Ovary (tissue), 10 donors: ENCODE measurements at regions of chr9 and their contacts with region 1.

Region 1: DNA sequence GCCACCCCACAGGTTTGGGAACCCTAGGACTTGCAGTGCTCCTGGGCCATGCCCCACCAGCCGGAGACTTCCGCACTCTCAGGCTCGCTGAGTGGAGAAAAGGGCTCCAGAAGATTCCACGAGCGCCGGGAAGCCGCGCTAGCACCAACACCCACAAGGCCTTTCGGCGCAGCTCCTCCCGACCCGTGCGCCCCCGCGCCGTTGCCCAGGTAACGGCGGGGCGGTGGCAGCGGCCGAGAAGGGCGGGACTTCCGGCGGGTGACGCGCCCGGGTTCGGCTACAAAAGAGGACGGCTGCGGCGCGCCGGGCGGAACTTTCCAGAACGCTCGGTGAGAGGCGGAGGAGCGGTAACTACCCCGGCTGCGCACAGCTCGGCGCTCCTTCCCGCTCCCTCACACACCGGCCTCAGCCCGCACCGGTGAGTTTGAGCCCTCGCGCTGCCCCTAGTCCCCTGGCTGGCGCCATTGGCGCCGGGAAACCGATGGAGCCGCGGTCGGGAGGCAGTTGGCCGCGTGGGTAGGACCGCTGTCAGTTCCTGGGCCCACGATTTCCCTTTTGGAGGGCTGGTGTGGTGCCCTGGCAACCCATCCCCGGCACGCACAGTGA is at the start of gene DNAJA1:
- DNase-seq: peak; percentile 93 to 97 (median 95)
- H3K4me3 ChIP-seq: peak within 1 kb of the TSS; percentile 89
- H3K27ac ChIP-seq: peak within 1 kb of the TSS; percentile 99
- H3K4me1 ChIP-seq: peaks cover 5% of the 10 kb centered on the region
- H3K27me3 ChIP-seq: no peaks in the 10 kb centered on the region
- CTCF ChIP-seq: peak in 1 of 3 donors; percentile 15
- EP300 ChIP-seq: peak; percentile 41
- POLR2A ChIP-seq: peak; percentile 95
- total RNA-seq, gene DNAJA1: 66.1 to 156 (median 112) TPM

Region 2: DNA sequence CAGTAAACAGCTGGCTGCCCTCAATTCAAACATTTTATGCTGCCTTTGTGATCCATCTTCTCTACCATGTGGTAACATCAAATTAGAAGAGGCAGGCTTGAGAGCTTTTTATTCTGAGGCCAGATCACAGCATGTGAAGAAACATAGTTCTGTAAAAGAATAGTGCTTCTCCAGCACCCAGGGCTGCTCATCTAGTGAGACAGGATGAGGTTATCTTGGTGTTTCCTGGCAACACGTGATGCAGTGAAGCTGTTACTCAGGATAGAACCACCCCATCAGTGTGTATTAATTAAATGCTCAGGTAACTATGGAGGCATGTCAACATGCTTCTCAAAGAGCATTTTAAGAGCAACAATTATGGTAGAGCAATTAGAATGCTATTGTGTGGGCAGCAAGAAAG is 1041.2 kb before region 1 on chr9:
- intact Hi-C with region 1: no loop called
- DNase-seq: no peak
- H3K4me3 ChIP-seq: no peak overlapping the region
- H3K27ac ChIP-seq: no peak overlapping the region
- H3K4me1 ChIP-seq: no peaks in the 10 kb centered on the region
- H3K27me3 ChIP-seq: no peaks in the 10 kb centered on the region
- CTCF ChIP-seq: no peak
- EP300 ChIP-seq: no peak
- POLR2A ChIP-seq: no peak

Region 3: DNA sequence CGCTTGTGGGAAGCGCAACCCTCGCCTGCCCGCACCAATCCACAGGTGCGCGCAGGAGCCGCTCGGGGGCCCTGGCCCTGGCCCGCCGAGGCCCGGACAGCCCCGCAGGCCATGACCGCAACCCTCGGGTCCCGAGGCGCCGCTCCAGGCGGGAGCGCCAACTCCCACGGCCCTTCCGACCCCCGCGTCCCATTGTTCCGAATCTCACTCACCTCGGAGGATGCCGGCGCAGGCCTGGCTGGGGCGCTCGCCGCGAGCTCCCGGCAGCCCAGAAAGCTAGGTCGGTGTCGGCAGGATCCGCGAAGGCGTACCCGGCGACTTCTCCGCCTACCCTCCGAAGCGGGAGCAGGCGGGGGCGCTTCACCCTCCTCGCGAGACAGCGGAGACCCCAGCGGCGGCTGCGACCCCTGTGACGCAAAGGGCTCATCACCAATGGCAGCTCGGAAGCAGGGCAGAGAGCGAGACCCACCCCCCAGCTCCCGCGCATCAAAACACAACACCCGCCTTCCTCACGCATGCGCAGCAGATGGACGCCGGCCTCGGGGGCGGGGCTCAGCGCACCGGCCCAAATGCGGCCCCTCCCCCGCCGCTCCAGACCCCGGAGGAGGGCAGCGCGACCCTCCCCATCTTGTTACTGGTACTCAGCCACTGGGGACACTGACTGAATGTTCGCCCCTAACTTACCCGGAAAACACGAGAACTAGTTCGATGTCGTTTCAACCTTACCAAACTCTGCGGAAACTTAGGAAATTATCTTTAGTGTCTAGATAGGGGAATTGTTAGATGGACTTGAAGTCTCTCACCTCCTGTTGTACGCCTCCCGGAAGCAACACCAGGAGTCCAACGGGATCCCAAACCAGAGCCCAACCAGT is 474.3 kb before region 1 on chr9:
- intact Hi-C with region 1: loop called in 1 of 4 experiments (anchors 10 kb)
- DNase-seq: peak; percentile 94 to 97 (median 96)
- H3K4me3 ChIP-seq: peak overlapping the region; percentile 60
- H3K27ac ChIP-seq: peak overlapping the region; percentile 95 to 99
- H3K4me1 ChIP-seq: no peaks in the 10 kb centered on the region
- H3K27me3 ChIP-seq: no peaks in the 10 kb centered on the region
- CTCF ChIP-seq: no peak
- EP300 ChIP-seq: no peak
- POLR2A ChIP-seq: peak; percentile 68

Region 4: GRCh38 chr9:32954642-32955041 is 70.4 kb before region 1 on chr9:
- intact Hi-C with region 1: no loop called
- DNase-seq: no peak
- H3K4me3 ChIP-seq: no peak overlapping the region
- H3K27ac ChIP-seq: no peak overlapping the region
- H3K4me1 ChIP-seq: peaks cover 4% of the 10 kb centered on the region
- H3K27me3 ChIP-seq: no peaks in the 10 kb centered on the region
- CTCF ChIP-seq: no peak
- EP300 ChIP-seq: no peak
- POLR2A ChIP-seq: no peak